ENCODE measurements at regions of chrX and their contacts with region 1.

Region 1: DNA sequence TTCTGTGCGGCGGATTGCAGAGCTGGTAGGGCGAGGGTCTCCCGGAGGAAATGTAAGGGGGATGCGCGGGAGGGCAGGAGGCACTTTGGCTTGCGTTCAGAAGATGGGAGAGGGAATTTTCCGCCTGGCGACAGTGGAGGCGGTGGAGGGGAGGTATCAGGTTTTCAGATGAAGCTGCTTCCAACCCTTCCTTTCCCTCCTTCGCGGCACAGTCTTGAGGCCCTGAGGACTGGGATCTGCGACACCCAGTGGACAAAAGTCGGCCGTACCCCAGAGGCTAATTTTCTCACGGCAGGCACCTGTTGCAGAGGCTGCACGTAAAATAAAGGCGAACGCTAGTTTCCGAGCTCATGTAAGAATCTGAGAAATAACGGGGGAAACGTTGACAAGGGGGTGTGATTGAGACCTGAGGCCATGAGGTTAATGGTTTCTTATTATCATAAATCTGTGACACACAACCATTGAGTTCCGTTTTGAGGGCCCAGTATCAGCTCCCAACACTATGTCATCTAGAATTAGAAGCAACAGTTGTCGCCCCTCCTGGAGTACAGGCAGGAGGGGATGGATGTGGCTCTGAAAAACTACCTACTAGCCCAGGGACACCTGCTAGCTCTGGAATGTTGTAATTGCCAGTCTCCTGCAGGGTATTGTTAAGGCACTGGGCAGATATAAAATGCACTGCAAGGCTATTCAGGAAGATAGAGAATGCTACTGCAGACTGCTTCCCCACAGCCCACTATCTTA is 1.1 kb downstream of the ZCCHC18 start:
- DNase-seq: peak; percentile 2
- ATAC-seq: peak; percentile 89
- H3K4me3 ChIP-seq: peak overlapping the region in 1 of 3 experiments; percentile 62; a peak in 2 of 6 replicates
- H3K27ac ChIP-seq: no peak overlapping the region
- H3K4me1 ChIP-seq: no peaks in the 10 kb centered on the region
- H3K27me3 ChIP-seq: peaks cover 0 to 7% of the 10 kb centered on the region in 2 experiments; a peak in 1 of 5 replicates
- CTCF ChIP-seq: peak; percentile 58
- EP300 ChIP-seq: no peak
- POLR2A ChIP-seq: no peak
- RAD21 ChIP-seq: no peak

Region 2: GRCh38 chrX:103533511-103534216 is 579.7 kb before region 1 on chrX:
- CTCF ChIA-PET with region 1: no interaction called
- POLR2A ChIA-PET with region 1: no interaction called
- in situ Hi-C with region 1: loop called (anchors 25 kb)
- intact Hi-C with region 1: no loop called
- DNase-seq: peak; percentile 43
- ATAC-seq: peak; percentile 81
- H3K4me3 ChIP-seq: peak overlapping the region; percentile 2 to 65 (median 49); a peak in 5 of 6 replicates
- H3K27ac ChIP-seq: no peak overlapping the region
- H3K4me1 ChIP-seq: no peaks in the 10 kb centered on the region
- H3K27me3 ChIP-seq: no peaks in the 10 kb centered on the region
- CTCF ChIP-seq: peak; percentile 75
- EP300 ChIP-seq: no peak
- POLR2A ChIP-seq: no peak
- RAD21 ChIP-seq: 0 out of 2 replicates have a peak, but pooled peaks have one; percentile 18

Region 3: GRCh38 chrX:103845165-103845653 is 268.2 kb before region 1 on chrX:
- CTCF ChIA-PET with region 1: no interaction called
- POLR2A ChIA-PET with region 1: no interaction called
- in situ Hi-C with region 1: loop called (anchors 25 kb)
- intact Hi-C with region 1: no loop called
- DNase-seq: peak; percentile 10
- ATAC-seq: peak; percentile 76
- H3K4me3 ChIP-seq: no peak overlapping the region
- H3K27ac ChIP-seq: no peak overlapping the region
- H3K4me1 ChIP-seq: no peaks in the 10 kb centered on the region
- H3K27me3 ChIP-seq: no peaks in the 10 kb centered on the region
- CTCF ChIP-seq: peak; percentile 63
- EP300 ChIP-seq: no peak
- POLR2A ChIP-seq: no peak
- RAD21 ChIP-seq: no peak

Region 4: DNA sequence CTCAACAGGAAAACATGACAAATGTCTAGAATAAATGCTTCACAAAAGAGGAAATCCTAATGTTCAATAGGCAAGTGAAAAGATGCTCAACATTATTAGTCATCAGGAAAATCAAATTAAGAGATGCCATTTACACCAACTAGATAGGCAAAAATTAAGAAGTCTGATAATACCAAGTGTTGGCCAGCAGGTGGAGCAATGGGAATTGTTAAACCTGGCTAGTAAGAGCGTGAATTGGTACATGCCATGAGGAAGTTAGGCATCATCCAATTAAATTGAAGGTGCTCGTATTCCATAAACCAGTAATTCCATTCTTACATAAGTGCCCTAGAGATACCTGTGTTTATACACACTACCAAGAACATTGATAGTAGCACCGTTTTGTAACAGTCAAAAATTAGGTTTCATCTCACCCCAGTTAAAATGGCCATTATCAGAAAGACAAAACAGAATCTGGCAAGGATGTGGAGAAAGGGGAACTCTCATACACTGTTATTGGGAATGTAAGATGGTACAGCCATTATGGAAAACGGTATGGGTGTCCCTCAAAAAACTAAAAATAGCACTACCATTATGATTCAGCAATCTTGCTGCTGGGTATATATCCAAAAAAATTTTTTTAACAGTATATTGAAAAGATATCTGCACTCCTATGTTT is 15.1 kb before region 1 on chrX:
- CTCF ChIA-PET with region 1: interaction called, 3 read pairs
- POLR2A ChIA-PET with region 1: no interaction called
- in situ Hi-C with region 1: no loop called
- intact Hi-C with region 1: loop called (anchors 1 kb)
- DNase-seq: peak; percentile 22
- ATAC-seq: 0 out of 3 replicates have a peak, but pooled peaks have one; percentile 31
- H3K4me3 ChIP-seq: no peak overlapping the region
- H3K27ac ChIP-seq: no peak overlapping the region
- H3K4me1 ChIP-seq: no peaks in the 10 kb centered on the region
- H3K27me3 ChIP-seq: no peaks in the 10 kb centered on the region
- CTCF ChIP-seq: peak; percentile 59
- EP300 ChIP-seq: no peak
- POLR2A ChIP-seq: no peak
- RAD21 ChIP-seq: no peak